ENCODE measurements at regions of chr1 and their contacts with region 1.

Region 1: GRCh38 chr1:224434691-224435317 is at the start of gene WDR26:
- DNase-seq: peak; percentile 76 to 88
- ATAC-seq: peak; percentile 81 to 89 (median 84)
- H3K4me3 ChIP-seq: peak within 1 kb of the TSS; percentile 85
- H3K27ac ChIP-seq: peak within 1 kb of the TSS; percentile 96
- H3K4me1 ChIP-seq: peaks cover 35% of the 10 kb centered on the region
- H3K27me3 ChIP-seq: no peaks in the 10 kb centered on the region
- CTCF ChIP-seq: no peak
- total RNA-seq, gene WDR26: 82.4 to 114 (median 107) TPM

Region 2: DNA sequence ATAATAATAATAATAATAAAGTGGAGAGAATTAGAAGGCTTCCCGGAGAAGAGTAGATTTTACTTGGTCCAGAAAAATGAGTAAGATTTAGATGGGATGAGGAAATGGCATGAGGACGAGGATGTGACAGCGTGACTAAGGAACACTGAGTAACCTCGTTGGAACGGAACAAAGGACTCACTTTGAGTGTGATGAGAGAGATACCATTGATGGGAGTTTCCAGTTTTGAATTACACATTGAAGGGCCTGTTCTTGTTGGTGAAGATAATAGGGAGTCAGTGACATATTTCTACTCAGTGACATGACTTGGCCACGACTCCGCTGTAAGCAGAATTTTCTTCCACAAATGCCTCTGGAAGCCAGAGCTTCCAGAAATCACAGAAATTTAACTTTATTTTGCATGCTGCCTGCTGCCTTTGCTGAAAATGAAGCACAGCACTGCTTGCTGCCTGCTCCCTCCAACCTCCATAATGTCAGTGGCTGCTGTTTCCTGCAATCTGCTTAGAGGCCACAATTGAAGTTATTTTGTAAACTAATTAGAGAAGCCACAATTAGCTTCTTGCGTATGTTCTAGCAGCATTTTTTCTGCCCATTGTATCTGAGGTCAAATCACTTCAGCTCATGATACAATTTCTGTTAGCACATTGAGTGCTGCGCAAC is 354.6 kb before region 1 on chr1:
- intact Hi-C with region 1: no loop called
- DNase-seq: no peak
- ATAC-seq: no peak
- H3K4me3 ChIP-seq: no peak overlapping the region
- H3K27ac ChIP-seq: no peak overlapping the region
- H3K4me1 ChIP-seq: no peaks in the 10 kb centered on the region
- H3K27me3 ChIP-seq: peaks cover 0 to 8% (median 0%) of the 10 kb centered on the region in 3 donors
- CTCF ChIP-seq: no peak

Region 3: GRCh38 chr1:224223819-224224714 is 210.7 kb before region 1 on chr1:
- intact Hi-C with region 1: no loop called
- DNase-seq: no peak
- ATAC-seq: peak in 1 of 4 donors; percentile 61
- H3K4me3 ChIP-seq: no peak overlapping the region
- H3K27ac ChIP-seq: no peak overlapping the region
- H3K4me1 ChIP-seq: no peaks in the 10 kb centered on the region
- H3K27me3 ChIP-seq: no peaks in the 10 kb centered on the region
- CTCF ChIP-seq: no peak

Region 4: DNA sequence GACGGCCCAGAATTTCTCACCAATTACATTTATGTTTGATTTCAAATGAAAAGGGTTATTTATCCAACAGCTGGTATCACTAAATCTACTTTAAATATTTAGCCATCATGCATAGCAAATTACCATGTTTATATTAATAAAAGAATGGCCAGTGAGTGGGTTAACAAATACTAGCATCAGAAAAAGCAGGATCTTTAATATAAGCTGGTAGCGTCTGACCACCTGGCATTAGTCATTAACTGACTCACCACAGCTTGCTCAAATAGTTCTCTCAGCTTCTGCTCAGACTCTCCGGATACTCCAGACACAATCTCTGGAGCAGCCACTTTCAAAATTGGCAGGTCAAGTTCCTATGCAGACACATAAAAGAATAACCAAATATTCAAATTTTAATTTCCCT is 134.5 kb before region 1 on chr1:
- intact Hi-C with region 1: no loop called
- DNase-seq: no peak
- ATAC-seq: no peak
- H3K4me3 ChIP-seq: no peak overlapping the region
- H3K27ac ChIP-seq: no peak overlapping the region
- H3K4me1 ChIP-seq: no peaks in the 10 kb centered on the region
- H3K27me3 ChIP-seq: no peaks in the 10 kb centered on the region
- CTCF ChIP-seq: no peak

Region 5: GRCh38 chr1:224454397-224455066 is 19.7 kb after region 1 on chr1:
- intact Hi-C with region 1: loop called in 1 of 2 experiments (anchors 2 kb)
- DNase-seq: no peak
- ATAC-seq: no peak
- H3K4me3 ChIP-seq: no peak overlapping the region
- H3K27ac ChIP-seq: no peak overlapping the region
- H3K4me1 ChIP-seq: peaks cover 20% of the 10 kb centered on the region
- H3K27me3 ChIP-seq: no peaks in the 10 kb centered on the region
- CTCF ChIP-seq: no peak

Region 6: GRCh38 chr1:224472806-224473205 is 38.0 kb after region 1 on chr1:
- intact Hi-C with region 1: no loop called
- DNase-seq: no peak
- ATAC-seq: no peak
- H3K4me3 ChIP-seq: no peak overlapping the region
- H3K27ac ChIP-seq: no peak overlapping the region
- H3K4me1 ChIP-seq: no peaks in the 10 kb centered on the region
- H3K27me3 ChIP-seq: no peaks in the 10 kb centered on the region
- CTCF ChIP-seq: no peak

Measured in psoas muscle (tissue), 8 donors.